Vagina (tissue), 2 donors: ENCODE measurements at regions of chr22 and their contacts with region 1.

Region 1: GRCh38 chr22:40764763-40765441 is 54.2 kb downstream of the SLC25A17 start:
- DNase-seq: no peak
- H3K4me3 ChIP-seq: no peak overlapping the region
- H3K27ac ChIP-seq: no peak overlapping the region
- H3K4me1 ChIP-seq: peaks cover 6% of the 10 kb centered on the region
- H3K27me3 ChIP-seq: no peaks in the 10 kb centered on the region
- CTCF ChIP-seq: no peak
- POLR2A ChIP-seq: no peak

Region 2: DNA sequence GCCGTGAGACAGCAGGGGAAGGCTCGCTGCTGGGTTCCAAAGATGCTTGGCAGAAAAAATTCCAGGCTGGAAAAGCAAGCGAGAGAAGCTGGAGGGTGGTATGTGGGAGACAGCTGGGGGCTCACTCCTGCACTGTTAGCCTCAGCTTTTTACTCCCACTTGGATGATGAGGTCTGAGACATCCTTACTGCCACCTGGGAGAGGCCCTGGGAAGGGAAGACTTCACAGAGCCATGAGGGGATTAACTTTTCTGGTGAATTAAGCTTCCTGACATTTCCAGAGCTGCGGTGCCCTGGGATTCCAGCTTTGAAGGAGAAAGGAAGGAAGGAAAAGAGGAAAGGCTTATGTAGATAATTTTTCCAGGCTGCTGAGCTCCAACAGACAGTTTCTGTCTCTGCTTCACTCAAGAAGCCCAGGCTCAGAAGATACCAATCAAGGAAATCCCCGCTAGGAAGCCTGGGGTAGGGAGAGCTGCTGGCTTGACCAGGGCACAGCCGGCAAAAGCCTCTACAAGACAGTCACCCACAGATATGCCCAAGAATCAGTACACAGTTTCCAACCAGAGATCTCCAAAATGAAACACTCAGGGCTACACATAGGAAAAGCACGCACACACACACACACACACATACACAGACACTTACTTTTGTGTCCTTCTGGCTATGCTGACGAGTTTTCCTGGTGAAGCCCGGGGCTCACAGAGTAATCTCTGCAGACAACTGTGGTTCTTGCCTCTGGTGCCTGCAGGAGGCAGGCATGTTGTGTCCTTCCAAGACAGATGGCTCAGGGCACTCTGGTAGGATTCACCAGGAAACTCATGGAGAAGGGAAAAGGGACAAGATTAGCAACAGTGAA is 84.7 kb before region 1 on chr22:
- intact Hi-C with region 1: loop called (anchors 5 kb)
- DNase-seq: no peak
- H3K4me3 ChIP-seq: peak overlapping the region in 1 of 2 donors; percentile 46
- H3K27ac ChIP-seq: no peak overlapping the region
- H3K4me1 ChIP-seq: peaks cover 27% of the 10 kb centered on the region
- H3K27me3 ChIP-seq: no peaks in the 10 kb centered on the region
- CTCF ChIP-seq: no peak
- POLR2A ChIP-seq: no peak

Region 3: GRCh38 chr22:40694411-40694810 is 70.5 kb before region 1 on chr22:
- intact Hi-C with region 1: no loop called
- DNase-seq: no peak
- H3K4me3 ChIP-seq: no peak overlapping the region
- H3K27ac ChIP-seq: peak overlapping the region; percentile 21
- H3K4me1 ChIP-seq: peaks cover 8% of the 10 kb centered on the region
- H3K27me3 ChIP-seq: no peaks in the 10 kb centered on the region
- CTCF ChIP-seq: no peak
- POLR2A ChIP-seq: no peak